ENCODE measurements at regions of chr5 and their contacts with region 1.

Region 1: GRCh38 chr5:163347671-163348070 is 89.7 kb upstream of the CCNG1 start:
- DNase-seq: peak; percentile 66
- ATAC-seq: peak; percentile 62
- H3K4me3 Mint-ChIP-seq: no peak overlapping the region
- H3K27ac Mint-ChIP-seq: no peak overlapping the region
- H3K4me1 Mint-ChIP-seq: no peaks in the 10 kb centered on the region
- H3K27me3 Mint-ChIP-seq: peaks cover 1% of the 10 kb centered on the region
- CTCF ChIP-seq: peak; percentile 79

Region 2: DNA sequence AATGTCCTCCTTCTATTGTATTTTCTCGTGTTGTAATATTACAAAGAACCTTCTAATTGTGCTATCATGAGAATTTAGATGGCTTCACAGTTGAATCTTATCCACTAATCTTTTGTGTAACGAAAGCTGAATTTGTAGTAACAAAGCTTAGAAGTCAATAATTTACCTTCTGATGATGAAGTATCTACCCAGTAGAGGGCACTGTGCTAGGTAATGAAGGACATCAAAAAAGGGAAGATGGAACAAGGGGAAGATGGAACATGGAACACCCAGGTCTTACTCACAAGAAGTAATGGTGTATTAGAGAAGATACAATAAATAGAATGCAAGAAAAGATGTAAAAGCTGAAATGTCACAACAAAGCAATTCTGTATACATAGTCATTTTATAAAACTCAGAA is 41.2 kb before region 1 on chr5:
- CTCF ChIA-PET with region 1: interaction called, 12 read pairs
- POLR2A ChIA-PET with region 1: no interaction called
- intact Hi-C with region 1: no loop called
- DNase-seq: no peak
- ATAC-seq: no peak
- H3K4me3 Mint-ChIP-seq: no peak overlapping the region
- H3K27ac Mint-ChIP-seq: no peak overlapping the region
- H3K4me1 Mint-ChIP-seq: no peaks in the 10 kb centered on the region
- H3K27me3 Mint-ChIP-seq: no peaks in the 10 kb centered on the region
- CTCF ChIP-seq: no peak

Region 3: GRCh38 chr5:163362840-163363788 is 15.4 kb after region 1 on chr5:
- CTCF ChIA-PET with region 1: interaction called, 11 read pairs
- POLR2A ChIA-PET with region 1: interaction called, 3 read pairs
- intact Hi-C with region 1: no loop called
- DNase-seq: no peak
- ATAC-seq: no peak
- H3K4me3 Mint-ChIP-seq: no peak overlapping the region
- H3K27ac Mint-ChIP-seq: no peak overlapping the region
- H3K4me1 Mint-ChIP-seq: no peaks in the 10 kb centered on the region
- H3K27me3 Mint-ChIP-seq: peaks cover 8% of the 10 kb centered on the region
- CTCF ChIP-seq: no peak

Region 4: DNA sequence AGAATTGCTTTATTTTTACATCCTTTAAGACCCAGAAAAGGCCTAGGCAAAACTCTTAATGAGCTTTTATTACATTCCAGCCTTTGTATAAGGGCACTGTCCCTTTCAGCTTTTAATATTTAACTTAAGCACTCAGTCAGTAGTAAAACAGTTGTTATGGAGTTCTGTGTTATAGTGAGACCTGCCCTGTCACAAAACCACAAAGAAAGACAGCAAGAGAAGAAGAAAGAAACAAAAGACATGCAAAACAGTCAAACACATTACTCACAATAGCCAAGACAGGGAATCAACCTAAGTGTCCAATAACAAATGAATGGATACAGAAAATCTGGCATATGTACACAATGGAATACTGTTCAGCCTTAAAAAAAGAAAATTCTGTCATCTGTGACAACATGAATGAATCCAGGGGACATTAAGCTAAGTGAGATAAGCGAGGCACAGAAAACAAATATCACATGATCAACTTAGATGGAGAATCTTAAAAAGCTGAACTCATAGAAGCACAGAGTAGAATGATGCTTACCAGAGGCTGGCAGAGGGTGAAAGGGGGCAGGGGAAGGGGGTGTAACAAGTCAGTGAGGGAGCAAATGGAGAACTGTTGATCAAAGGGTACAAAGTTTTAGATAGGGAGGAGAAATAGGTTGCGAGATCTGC is 25.9 kb after region 1 on chr5:
- CTCF ChIA-PET with region 1: interaction called, 11 read pairs
- POLR2A ChIA-PET with region 1: no interaction called
- intact Hi-C with region 1: no loop called
- DNase-seq: no peak
- ATAC-seq: no peak
- H3K4me3 Mint-ChIP-seq: no peak overlapping the region
- H3K27ac Mint-ChIP-seq: no peak overlapping the region
- H3K4me1 Mint-ChIP-seq: no peaks in the 10 kb centered on the region
- H3K27me3 Mint-ChIP-seq: no peaks in the 10 kb centered on the region
- CTCF ChIP-seq: no peak

Region 5: GRCh38 chr5:163453705-163454104 is 106.0 kb after region 1 on chr5:
- CTCF ChIA-PET with region 1: no interaction called
- POLR2A ChIA-PET with region 1: no interaction called
- intact Hi-C with region 1: no loop called
- DNase-seq: no peak
- ATAC-seq: no peak
- H3K4me3 Mint-ChIP-seq: no peak overlapping the region
- H3K27ac Mint-ChIP-seq: no peak overlapping the region
- H3K4me1 Mint-ChIP-seq: peaks cover 30% of the 10 kb centered on the region
- H3K27me3 Mint-ChIP-seq: no peaks in the 10 kb centered on the region
- CTCF ChIP-seq: no peak